SK-N-SH (cell line): ENCODE measurements at regions of chr2 and their contacts with region 1.

Region 1: GRCh38 chr2:174748948-174749347 is 15.3 kb downstream of the CHRNA1 start:
- DNase-seq: peak; percentile 77
- H3K4me3 ChIP-seq: no peak overlapping the region
- H3K27ac ChIP-seq: no peak overlapping the region
- H3K4me1 ChIP-seq: no peaks in the 10 kb centered on the region
- H3K27me3 ChIP-seq: no peaks in the 10 kb centered on the region
- CTCF ChIP-seq: peak; percentile 87
- EP300 ChIP-seq: no peak
- RAD21 ChIP-seq: peak; percentile 87

Region 2: DNA sequence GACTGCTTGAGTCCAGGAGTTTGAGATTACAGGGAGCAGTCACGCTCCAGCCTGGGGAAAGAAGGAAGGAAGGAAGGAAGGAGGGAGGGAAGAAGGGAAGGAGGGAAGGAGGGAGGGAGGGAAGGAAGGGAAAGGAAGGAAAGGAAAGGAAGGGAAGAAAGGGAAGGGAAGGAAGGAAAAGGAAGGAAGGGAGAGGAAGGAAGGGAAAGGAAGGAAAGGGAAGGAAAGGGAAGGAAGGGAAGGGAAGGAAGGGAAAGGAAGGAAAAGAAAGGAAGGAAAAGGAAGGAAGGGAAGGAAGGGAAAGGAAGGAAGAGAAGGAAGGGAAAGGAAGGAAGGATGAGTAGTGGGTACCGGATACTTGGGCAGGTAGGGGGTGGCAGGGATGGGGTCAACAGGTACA is 294.4 kb before region 1 on chr2:
- CTCF ChIA-PET with region 1: no interaction called
- POLR2A ChIA-PET with region 1: no interaction called
- DNase-seq: no peak
- H3K4me3 ChIP-seq: no peak overlapping the region
- H3K27ac ChIP-seq: no peak overlapping the region
- H3K4me1 ChIP-seq: peaks cover 0 to 2% of the 10 kb centered on the region in 2 experiments; a peak in 2 of 4 replicates
- H3K27me3 ChIP-seq: no peaks in the 10 kb centered on the region
- CTCF ChIP-seq: no peak
- EP300 ChIP-seq: no peak
- RAD21 ChIP-seq: no peak

Region 3: GRCh38 chr2:174729797-174730697 is 18.9 kb before region 1 on chr2:
- CTCF ChIA-PET with region 1: interaction called, 22 read pairs
- POLR2A ChIA-PET with region 1: no interaction called
- DNase-seq: peak; percentile 77
- H3K4me3 ChIP-seq: peak overlapping the region; percentile 40 to 50
- H3K27ac ChIP-seq: no peak overlapping the region
- H3K4me1 ChIP-seq: peaks cover 0 to 8% of the 10 kb centered on the region in 2 experiments; a peak in 1 of 4 replicates
- H3K27me3 ChIP-seq: peaks cover 21% of the 10 kb centered on the region; the same call in 1 of the 2 replicates
- CTCF ChIP-seq: no peak
- EP300 ChIP-seq: no peak
- RAD21 ChIP-seq: no peak

Region 4: DNA sequence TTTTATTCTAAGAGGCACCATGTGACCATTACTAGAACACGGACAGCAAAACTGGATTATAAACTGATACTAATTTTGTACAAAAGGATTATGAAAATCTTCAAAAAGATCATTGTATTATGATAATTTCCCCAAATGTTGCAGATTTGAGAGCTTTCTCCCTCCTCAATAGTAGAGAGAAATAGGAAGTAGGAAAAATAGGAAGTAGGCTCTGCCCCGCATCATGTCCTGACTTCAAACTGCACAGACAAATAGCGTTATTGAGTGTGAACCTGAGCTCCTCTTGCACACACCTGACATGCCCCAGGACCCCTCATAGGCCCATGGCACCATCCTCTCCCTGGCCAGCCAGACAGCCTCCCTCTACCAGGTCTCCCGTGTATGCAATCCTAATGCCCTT is 10.1 kb before region 1 on chr2:
- CTCF ChIA-PET with region 1: interaction called, 22 read pairs
- POLR2A ChIA-PET with region 1: no interaction called
- DNase-seq: no peak
- H3K4me3 ChIP-seq: no peak overlapping the region
- H3K27ac ChIP-seq: no peak overlapping the region
- H3K4me1 ChIP-seq: no peaks in the 10 kb centered on the region
- H3K27me3 ChIP-seq: no peaks in the 10 kb centered on the region
- CTCF ChIP-seq: no peak
- EP300 ChIP-seq: no peak
- RAD21 ChIP-seq: no peak

Region 5: GRCh38 chr2:174764280-174765255 is 15.6 kb after region 1 on chr2 and contains the start of gene CHRNA1:
- CTCF ChIA-PET with region 1: interaction called, 66 read pairs
- POLR2A ChIA-PET with region 1: no interaction called
- DNase-seq: no peak
- H3K4me3 ChIP-seq: no peak within 1 kb of the TSS
- H3K27ac ChIP-seq: no peak within 1 kb of the TSS
- H3K4me1 ChIP-seq: peaks cover 0 to 10% of the 10 kb centered on the region in 2 experiments; a peak in 2 of 4 replicates
- H3K27me3 ChIP-seq: no peaks in the 10 kb centered on the region
- CTCF ChIP-seq: no peak
- EP300 ChIP-seq: no peak
- RAD21 ChIP-seq: no peak
- polyA plus RNA-seq, gene CHRNA1: 0.02 and 0.08 TPM in 2 replicates

Region 6: DNA sequence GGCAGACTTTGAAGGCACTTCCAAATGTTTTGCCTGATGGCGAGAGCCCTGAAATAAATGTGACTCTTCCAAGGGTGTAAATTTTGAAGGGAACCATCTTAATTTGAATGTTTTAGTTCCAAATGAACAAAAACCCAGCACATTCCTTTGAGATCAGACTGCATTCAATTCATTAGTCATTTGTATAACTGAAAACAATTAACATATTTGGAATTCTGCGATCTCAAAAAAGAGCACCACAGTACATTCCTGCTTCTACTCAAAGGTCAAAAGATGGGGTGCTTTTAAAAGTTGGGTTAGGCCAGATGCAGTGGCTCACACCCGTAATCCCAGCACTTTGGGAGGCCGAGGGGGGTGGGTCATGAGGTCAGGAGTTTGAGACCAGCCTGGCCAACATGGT is 53.5 kb after region 1 on chr2:
- CTCF ChIA-PET with region 1: no interaction called
- POLR2A ChIA-PET with region 1: no interaction called
- DNase-seq: no peak
- H3K4me3 ChIP-seq: no peak overlapping the region
- H3K27ac ChIP-seq: peak overlapping the region; percentile 20 to 30; a peak in 3 of 4 replicates
- H3K4me1 ChIP-seq: peaks cover 2 to 19% of the 10 kb centered on the region in 2 experiments
- H3K27me3 ChIP-seq: no peaks in the 10 kb centered on the region
- CTCF ChIP-seq: no peak
- EP300 ChIP-seq: no peak
- RAD21 ChIP-seq: no peak

Region 7: DNA sequence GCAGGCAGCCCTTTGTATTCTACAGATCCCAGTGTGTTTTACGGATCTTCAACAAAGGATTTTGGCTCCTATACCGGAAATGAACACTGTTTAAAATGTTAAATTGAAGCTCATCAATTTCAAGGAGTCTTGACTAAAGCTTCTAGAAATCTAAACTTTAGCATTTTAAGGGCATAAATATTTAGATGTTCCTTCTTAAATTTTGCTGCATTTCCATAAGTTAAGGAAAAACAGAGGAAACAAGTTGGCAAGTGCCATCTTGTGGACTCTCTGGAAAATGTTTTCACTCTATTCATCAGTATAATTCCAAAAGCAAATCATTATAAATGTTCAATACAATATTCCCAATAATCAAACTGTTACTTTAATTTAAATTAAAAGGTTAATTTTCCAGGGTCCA is 236.7 kb after region 1 on chr2:
- CTCF ChIA-PET with region 1: interaction called, 50 read pairs
- POLR2A ChIA-PET with region 1: no interaction called
- DNase-seq: peak; percentile 27
- H3K4me3 ChIP-seq: no peak overlapping the region
- H3K27ac ChIP-seq: 0 out of 4 replicates have a peak overlapping the region, but pooled peaks of 1 of the 2 experiments have one; percentile 2
- H3K4me1 ChIP-seq: peaks cover 0 to 2% of the 10 kb centered on the region in 2 experiments; a peak in 2 of 4 replicates
- H3K27me3 ChIP-seq: no peaks in the 10 kb centered on the region
- CTCF ChIP-seq: peak; percentile 83
- EP300 ChIP-seq: no peak
- RAD21 ChIP-seq: peak; percentile 87

Region 8: GRCh38 chr2:175030380-175031271 is 281.7 kb after region 1 on chr2:
- CTCF ChIA-PET with region 1: no interaction called
- POLR2A ChIA-PET with region 1: no interaction called
- DNase-seq: peak; percentile 33
- H3K4me3 ChIP-seq: no peak overlapping the region; a peak in 1 of 4 replicates
- H3K27ac ChIP-seq: no peak overlapping the region
- H3K4me1 ChIP-seq: no peaks in the 10 kb centered on the region
- H3K27me3 ChIP-seq: no peaks in the 10 kb centered on the region
- CTCF ChIP-seq: peak; percentile 50
- EP300 ChIP-seq: no peak
- RAD21 ChIP-seq: peak; percentile 75